Activated CD8-positive, alpha-beta T cell treated with anti-CD3 and anti-CD28 coated beads for 36 hours (primary cell): ENCODE measurements at regions of chr11 and their contacts with region 1.

Region 1: DNA sequence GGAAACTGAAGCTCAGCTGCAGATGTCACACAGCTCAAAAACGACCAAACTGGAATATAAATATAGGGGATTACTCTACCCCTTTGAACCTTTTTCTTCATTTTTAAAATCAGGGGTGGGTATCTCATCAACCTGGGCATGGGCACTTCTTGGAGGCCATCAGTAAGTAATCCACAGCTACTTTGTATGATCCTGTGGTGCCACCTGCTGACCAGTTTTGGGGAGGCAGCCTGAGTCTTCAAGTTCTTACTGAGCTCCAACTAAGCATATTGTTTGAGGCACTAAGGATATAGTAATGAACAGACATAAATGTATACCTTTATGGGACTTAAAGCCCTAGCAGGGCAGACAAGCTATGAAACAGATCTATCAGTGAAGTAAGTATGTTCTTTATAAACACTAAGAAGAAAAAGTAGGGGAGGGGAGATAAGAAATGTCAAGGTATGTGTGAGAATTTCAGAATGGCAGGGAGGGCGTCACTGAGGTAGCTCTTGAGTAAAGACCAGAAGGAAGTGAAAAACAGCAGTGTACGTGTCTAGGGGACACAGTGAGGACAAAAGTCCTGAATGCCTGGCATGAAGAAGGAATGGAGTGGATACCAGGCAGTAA is 18.4 kb downstream of the TUB start:
- DNase-seq: peak; percentile 88
- ATAC-seq: peak; percentile 69
- H3K4me3 Mint-ChIP-seq: no peak overlapping the region
- H3K27ac Mint-ChIP-seq: no peak overlapping the region
- H3K4me1 Mint-ChIP-seq: no peaks in the 10 kb centered on the region
- H3K27me3 Mint-ChIP-seq: no peaks in the 10 kb centered on the region
- CTCF ChIP-seq: peak; percentile 74

Region 2: GRCh38 chr11:7892840-7893254 is 206.5 kb before region 1 on chr11:
- CTCF ChIA-PET with region 1: interaction called, 9 read pairs
- POLR2A ChIA-PET with region 1: no interaction called
- intact Hi-C with region 1: loop called (anchors 10 kb)
- DNase-seq: no peak
- ATAC-seq: peak; percentile 90
- H3K4me3 Mint-ChIP-seq: no peak overlapping the region
- H3K27ac Mint-ChIP-seq: no peak overlapping the region
- H3K4me1 Mint-ChIP-seq: no peaks in the 10 kb centered on the region
- H3K27me3 Mint-ChIP-seq: peaks cover 3% of the 10 kb centered on the region
- CTCF ChIP-seq: peak; percentile 73

Region 3: DNA sequence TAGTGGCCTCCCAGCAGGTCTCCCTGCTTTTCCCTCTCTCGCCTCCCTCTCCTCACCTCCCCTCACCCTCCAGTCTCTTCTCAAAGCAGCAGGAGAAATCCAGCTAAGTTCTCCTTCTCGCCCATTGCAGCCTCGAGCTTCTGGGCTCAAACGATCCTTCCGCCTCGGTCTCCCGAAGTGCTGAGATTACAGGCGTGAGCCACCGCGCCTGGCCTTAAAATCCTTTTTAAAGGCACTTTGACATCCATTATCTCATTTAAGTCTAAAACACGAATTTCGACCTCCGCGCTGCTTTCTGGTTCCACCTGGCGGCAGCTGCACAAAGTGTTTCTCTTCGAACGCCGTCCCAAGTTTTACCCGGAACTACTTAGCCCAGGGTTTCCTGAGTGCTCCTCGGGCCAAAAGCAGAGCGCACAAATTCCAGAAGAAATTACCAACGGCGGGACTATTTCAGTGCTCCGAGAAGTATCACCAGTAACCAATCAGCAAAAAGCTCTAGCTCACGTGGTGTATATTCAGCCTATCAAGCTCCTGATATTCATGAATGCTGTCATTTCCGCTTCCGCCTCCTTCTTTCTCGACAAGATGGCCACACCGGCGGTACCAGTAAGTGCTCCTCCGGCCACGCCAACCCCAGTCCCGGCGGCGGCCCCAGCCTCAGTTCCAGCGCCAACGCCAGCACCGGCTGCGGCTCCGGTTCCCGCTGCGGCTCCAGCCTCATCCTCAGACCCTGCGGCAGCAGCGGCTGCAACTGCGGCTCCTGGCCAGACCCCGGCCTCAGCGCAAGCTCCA is 112.4 kb before region 1 on chr11 and contains the start of gene EIF3F:
- CTCF ChIA-PET with region 1: interaction called, 11 read pairs
- POLR2A ChIA-PET with region 1: no interaction called
- intact Hi-C with region 1: no loop called
- DNase-seq: peak; percentile 94
- ATAC-seq: peak; percentile 97
- H3K4me3 Mint-ChIP-seq: peak within 1 kb of the TSS; percentile 93
- H3K27ac Mint-ChIP-seq: peak within 1 kb of the TSS; percentile 98
- H3K4me1 Mint-ChIP-seq: peaks cover 39% of the 10 kb centered on the region
- H3K27me3 Mint-ChIP-seq: no peaks in the 10 kb centered on the region
- CTCF ChIP-seq: peak; percentile 71
- total RNA-seq, gene EIF3F: 303 to 309 TPM

Region 4: DNA sequence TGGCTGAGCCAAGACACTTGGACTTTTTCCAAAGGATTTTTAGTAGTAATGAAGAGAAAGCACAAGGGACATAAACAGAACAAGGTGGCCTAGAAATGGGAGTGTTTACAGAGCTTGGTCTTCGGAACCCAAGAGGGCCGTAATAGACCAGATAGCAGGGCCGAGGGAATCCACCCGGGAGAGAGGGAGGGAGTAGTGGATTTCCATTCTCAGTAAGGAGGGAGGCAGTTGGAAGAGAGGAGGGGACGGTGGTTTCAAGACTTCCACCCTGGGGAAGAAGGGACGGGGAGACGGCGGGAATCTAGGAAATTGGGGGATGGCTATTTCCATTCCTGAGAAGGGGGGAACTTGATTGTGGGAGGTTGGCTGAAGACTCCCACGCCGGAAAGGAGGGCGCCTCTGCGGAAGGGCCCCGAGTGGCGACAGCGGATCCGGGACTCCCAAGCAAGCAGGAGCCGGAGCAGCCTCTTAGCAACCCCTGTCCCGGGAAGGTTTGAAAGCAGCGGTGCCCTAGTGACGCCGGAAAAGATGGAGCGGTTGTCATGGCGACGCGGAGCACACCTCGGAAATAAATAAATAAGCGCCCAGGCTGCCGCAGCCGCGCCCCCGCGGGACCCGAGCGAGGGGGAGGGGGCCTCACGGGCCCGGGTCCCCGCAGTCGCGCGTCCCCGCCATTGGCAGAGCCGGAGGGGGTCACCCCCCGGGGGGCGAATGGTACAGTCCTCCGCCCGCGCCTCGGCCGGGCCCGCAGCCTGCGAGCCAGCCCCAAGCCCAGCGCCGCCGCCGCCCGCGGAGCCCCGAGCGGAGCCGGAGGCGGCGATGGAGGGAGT is 80.7 kb before region 1 on chr11:
- CTCF ChIA-PET with region 1: interaction called, 27 read pairs
- POLR2A ChIA-PET with region 1: interaction called, 3 read pairs
- intact Hi-C with region 1: no loop called
- DNase-seq: peak; percentile 76
- ATAC-seq: peak; percentile 78
- H3K4me3 Mint-ChIP-seq: peak overlapping the region; percentile 61
- H3K27ac Mint-ChIP-seq: peak overlapping the region; percentile 20
- H3K4me1 Mint-ChIP-seq: peaks cover 11% of the 10 kb centered on the region
- H3K27me3 Mint-ChIP-seq: peaks cover 32% of the 10 kb centered on the region
- CTCF ChIP-seq: no peak

Region 5: GRCh38 chr11:8023831-8024555 is 75.4 kb before region 1 on chr11:
- CTCF ChIA-PET with region 1: interaction called, 27 read pairs
- POLR2A ChIA-PET with region 1: no interaction called
- intact Hi-C with region 1: no loop called
- DNase-seq: no peak
- ATAC-seq: no peak
- H3K4me3 Mint-ChIP-seq: no peak overlapping the region
- H3K27ac Mint-ChIP-seq: no peak overlapping the region
- H3K4me1 Mint-ChIP-seq: peaks cover 7% of the 10 kb centered on the region
- H3K27me3 Mint-ChIP-seq: peaks cover 15% of the 10 kb centered on the region
- CTCF ChIP-seq: no peak

Region 6: DNA sequence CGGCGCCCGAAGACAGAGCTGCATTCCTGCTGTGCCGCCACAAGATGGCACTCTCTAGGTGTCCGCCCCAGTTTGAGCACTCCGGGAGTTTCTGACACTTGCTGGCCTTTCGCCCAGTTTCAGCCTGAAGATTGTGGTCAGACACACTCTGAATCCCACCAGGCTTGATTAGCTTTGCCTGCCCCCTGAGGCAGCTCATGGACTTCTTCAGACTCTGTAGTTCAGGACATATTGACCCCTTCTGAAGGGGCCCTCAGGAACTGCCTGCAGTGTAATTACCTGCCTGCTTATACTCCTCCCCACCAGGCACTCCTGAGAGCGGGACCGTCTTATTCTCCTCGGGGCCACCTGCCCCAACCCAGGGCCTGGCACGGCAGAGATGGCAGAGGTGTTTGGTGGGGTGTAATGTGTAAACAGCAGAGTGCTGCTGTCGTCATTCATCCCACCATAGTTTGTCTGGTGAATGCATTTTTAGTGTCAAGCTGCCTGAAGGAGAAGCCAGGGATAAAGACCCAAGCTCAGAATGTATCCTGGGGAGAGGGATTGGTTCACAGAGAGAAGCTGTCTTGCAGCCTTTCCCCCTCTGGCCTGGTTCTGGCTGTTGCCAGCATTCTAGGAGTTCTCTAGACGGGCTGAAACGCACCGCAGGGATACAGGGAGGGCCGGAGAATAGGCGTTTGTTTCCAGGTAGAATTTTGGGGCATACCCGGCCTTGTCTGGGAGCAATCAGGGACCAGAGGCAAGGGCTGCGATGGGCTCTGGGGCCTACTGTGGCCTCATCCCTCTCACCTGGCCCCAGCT is 65.9 kb before region 1 on chr11:
- CTCF ChIA-PET with region 1: interaction called, 120 read pairs
- POLR2A ChIA-PET with region 1: no interaction called
- intact Hi-C with region 1: loop called (anchors 5 kb)
- DNase-seq: peak; percentile 61
- ATAC-seq: peak; percentile 93
- H3K4me3 Mint-ChIP-seq: no peak overlapping the region
- H3K27ac Mint-ChIP-seq: no peak overlapping the region
- H3K4me1 Mint-ChIP-seq: peaks cover 2% of the 10 kb centered on the region
- H3K27me3 Mint-ChIP-seq: peaks cover 15% of the 10 kb centered on the region
- CTCF ChIP-seq: peak; percentile 80

Region 7: DNA sequence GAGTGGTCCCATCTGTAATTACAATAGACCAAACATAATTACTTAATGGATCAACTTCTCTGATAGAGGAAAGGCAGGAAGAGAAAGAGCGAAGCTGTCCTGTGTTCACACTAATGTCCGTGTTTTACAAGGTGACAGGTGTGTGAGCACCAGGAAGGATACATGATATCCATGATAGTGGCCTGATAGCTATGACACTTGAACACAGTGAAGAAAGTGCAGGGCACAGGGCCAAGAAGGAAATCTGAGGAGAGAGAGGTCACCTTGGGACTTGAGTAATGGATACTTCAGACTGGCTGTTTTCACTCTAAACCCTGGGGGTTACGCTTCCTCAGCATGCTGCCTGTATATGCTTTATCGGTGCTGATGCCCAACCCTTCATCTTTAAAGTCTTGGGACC is 11.0 kb after region 1 on chr11:
- CTCF ChIA-PET with region 1: interaction called, 31 read pairs
- POLR2A ChIA-PET with region 1: no interaction called
- intact Hi-C with region 1: no loop called
- DNase-seq: no peak
- ATAC-seq: no peak
- H3K4me3 Mint-ChIP-seq: no peak overlapping the region
- H3K27ac Mint-ChIP-seq: no peak overlapping the region
- H3K4me1 Mint-ChIP-seq: no peaks in the 10 kb centered on the region
- H3K27me3 Mint-ChIP-seq: no peaks in the 10 kb centered on the region
- CTCF ChIP-seq: no peak

Region 8: GRCh38 chr11:8256271-8257002 is 157.0 kb after region 1 on chr11:
- CTCF ChIA-PET with region 1: no interaction called
- POLR2A ChIA-PET with region 1: no interaction called
- intact Hi-C with region 1: no loop called
- DNase-seq: no peak
- ATAC-seq: no peak
- H3K4me3 Mint-ChIP-seq: no peak overlapping the region
- H3K27ac Mint-ChIP-seq: no peak overlapping the region
- H3K4me1 Mint-ChIP-seq: no peaks in the 10 kb centered on the region
- H3K27me3 Mint-ChIP-seq: peaks cover 17% of the 10 kb centered on the region
- CTCF ChIP-seq: no peak